Spleen (tissue), 13 donors: ENCODE measurements at regions of chr2 and their contacts with region 1.

Region 1: DNA sequence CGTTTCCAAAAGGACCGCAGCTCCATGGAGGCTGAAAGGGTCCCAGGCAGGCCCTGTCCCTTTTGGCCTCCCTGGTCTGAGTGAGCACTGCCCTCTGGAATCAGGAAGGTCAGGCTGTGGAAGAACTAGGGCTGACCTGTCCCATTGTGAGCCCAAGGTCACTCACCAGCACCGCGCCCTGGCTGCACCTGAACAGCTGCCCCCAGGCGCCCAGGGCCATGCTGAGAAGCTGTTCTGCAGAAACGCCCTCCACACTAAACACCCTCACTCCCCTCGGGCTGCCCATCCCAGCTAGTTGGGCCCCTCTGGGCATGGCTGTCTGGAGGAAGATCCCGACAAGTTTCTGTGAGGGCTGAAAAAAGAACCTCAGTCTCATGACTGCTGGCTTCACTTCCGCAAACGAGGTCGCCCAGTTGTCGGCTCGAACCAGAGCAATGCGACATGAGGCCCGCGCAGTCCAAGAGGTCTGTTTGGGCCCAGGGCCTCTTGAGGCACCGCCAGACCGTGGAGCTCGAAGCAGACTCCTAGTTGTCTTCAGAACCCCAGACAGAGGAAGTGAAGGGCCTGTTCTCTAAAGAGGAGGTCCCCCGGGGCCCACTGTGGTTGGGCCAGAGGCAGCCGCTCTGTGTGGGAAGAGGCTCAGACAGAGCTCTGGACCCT is 64.4 kb downstream of the INPP5D start:
- DNase-seq: peak; percentile 92
- H3K4me3 ChIP-seq: no peak overlapping the region
- H3K27ac ChIP-seq: peak overlapping the region in 7 of 8 donors; percentile 8 to 86 (median 69)
- H3K4me1 ChIP-seq: peaks cover 7 to 71% (median 33%) of the 10 kb centered on the region in 6 donors
- H3K27me3 ChIP-seq: no peaks in the 10 kb centered on the region
- CTCF ChIP-seq: no peak
- POLR2A ChIP-seq: no peak

Region 2: DNA sequence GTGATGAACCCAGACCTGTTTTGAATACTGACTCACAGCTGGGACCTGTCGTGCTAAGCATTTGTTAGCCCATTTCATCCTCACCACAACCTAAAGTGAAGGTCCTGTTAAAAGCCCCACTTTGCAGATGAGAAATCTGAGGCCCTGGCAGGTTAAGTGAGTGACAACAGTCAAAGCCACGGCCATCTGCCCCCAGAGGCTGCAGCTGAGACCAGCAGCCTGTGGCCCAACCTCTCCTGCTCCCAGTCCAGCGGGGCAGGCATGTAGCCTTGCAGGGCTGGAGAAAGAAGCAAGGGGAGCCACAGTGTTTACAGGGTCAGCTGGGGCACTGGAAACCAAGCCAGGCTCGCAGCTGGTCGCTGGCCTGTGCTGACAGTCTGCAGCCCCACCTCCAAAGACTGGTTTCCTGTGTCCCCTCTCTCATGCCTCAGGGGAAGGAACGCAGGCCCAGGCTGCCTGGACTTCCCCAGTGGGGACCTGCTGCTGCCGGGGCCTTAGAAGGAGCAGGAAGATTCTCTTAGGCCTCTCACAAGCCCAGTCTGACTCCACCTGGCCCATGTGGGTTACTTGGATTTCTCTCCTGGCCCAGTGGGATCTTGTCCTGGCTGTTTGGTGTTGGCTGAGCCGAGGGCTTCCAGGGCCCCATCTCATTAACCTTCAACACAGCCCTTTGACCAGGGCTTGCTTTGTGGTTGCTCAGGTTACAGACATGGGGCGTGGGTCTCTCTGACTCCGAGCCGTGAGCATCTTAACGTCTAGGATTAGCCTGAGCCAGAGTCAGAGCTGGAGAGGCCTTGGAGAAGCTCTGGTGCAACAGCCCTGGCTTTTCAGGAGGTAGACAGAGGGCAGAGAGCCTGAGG is 62.7 kb before region 1 on chr2:
- intact Hi-C with region 1: loop called (anchors 10 kb)
- DNase-seq: peak; percentile 92
- H3K4me3 ChIP-seq: peak overlapping the region; percentile 64 to 98 (median 84)
- H3K27ac ChIP-seq: peak overlapping the region; percentile 89 to 97 (median 94)
- H3K4me1 ChIP-seq: peaks cover 44 to 87% (median 72%) of the 10 kb centered on the region in 6 donors
- H3K27me3 ChIP-seq: no peaks in the 10 kb centered on the region
- CTCF ChIP-seq: peak in 8 of 11 experiments; percentile 16 to 58 (median 40)
- POLR2A ChIP-seq: no peak

Region 3: DNA sequence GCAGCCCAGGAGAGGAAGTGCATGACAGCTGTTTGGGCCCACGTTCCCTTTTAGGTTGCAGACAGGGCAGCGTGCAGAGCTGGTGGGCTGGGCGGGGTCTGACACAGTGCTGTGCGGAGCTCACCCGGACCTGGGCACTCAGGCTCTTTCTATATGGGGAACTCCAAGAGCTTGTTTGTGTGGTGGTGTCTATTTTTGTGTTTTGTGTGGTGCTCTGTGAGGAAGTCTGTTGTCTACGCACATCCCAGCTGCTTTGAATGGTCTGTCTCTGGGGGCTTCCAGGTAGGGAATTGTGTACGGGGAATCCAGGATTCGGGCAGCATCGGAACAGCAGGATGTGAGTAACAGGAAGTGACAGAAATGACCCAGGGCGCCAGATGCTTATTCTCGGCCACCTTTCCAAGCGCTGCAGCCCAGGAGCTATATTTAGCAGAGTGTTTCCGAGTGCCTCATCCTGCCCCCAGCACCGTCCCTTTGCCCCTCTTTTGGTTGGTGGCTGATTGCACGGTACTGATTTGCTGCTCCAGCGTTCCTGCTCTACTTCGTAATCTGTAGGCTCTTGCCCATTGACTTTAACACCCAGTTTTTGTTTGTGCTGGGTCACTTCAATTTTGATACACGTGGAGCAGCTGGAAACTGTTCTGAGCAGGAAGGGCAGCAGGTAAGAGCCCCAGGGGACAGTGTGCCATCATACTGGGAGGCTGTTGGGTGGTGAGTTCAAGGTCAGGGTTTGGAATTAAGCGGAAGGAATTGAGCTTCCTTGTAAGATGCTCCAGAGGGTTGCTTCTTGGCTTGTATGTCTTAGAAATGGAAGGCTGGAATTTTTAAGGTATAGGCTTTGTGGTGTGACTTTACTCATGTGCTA is 294.4 kb after region 1 on chr2:
- intact Hi-C with region 1: no loop called
- DNase-seq: peak; percentile 91
- H3K4me3 ChIP-seq: peak overlapping the region in 7 of 8 donors; percentile 1 to 65 (median 23)
- H3K27ac ChIP-seq: peak overlapping the region; percentile 31 to 86 (median 66)
- H3K4me1 ChIP-seq: peaks cover 39 to 100% (median 80%) of the 10 kb centered on the region in 6 donors
- H3K27me3 ChIP-seq: no peaks in the 10 kb centered on the region
- CTCF ChIP-seq: no peak
- POLR2A ChIP-seq: no peak

Region 4: DNA sequence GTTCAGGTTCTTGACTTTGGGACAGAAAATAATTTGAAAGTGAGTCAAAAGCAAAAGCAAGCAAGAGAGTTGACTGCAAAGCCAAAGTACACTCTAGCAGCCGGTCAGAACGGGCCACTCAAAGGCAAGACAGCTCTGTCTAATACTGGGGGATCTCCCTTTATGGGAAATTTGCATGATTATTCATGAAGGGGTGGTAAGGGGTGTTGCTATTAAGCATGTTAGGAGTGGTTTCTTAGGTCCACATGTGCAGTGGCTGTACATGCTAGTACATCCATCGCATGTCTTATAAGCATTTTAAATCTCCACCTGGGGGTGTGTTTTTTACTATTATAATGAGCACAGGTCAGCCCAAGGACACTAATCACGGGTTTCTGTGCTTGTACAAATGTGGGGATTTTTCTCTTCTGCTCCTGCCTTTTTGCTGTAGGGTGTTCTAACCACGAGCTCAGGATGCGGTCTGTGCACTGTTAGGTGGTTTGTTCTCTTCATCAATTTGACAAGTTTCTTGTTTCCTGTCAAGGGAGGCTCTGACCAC is 865.8 kb after region 1 on chr2:
- intact Hi-C with region 1: no loop called
- DNase-seq: no peak
- H3K4me3 ChIP-seq: no peak overlapping the region
- H3K27ac ChIP-seq: peak overlapping the region in 4 of 8 donors; percentile 32 to 79 (median 56)
- H3K4me1 ChIP-seq: peaks cover 0 to 22% (median 5%) of the 10 kb centered on the region in 6 donors
- H3K27me3 ChIP-seq: peaks cover 0 to 12% (median 0%) of the 10 kb centered on the region in 7 donors
- CTCF ChIP-seq: no peak
- POLR2A ChIP-seq: no peak